ENCODE measurements at regions of chr22 and their contacts with region 1.

Region 1: DNA sequence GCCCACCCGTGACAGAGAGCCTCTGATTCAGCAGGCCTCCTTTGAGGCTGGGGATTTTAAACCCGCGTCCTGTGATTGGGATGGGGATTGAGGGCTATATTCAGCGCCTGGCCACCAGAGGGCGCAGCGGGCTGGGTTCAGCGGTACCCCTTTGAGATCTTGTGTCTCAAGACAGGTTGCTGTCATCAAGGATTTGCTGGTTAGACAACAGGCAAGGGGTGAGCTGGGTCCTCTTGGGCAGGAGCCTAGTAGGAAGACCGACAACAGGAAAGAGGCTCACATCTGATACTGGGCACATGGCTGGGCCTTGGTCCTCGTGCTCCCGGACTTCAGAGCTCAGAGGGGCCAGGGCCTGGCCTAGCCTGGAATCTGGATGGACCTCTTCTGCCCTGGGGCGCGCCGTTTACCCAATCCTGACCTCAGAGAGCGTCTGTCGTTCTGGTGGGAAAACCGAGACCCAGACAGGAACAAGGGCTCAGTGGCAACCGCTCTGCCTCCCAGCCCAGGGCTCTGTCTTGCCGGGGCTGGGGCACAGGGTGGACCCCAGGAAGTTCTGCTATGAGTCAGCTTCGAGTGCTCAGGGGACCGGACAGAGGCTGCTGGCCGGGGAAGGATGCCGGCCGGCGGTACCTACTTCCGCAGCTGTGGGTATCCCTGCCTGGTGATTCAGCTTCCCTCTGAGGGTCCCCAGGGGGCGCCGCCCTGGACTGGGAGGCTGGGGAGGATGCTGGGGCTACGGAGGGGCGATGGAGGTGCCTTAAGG is 929 bp upstream of the SLC35E4 start:
- DNase-seq: peak; percentile 61 to 96 (median 80)
- ATAC-seq: peak; percentile 69 to 86 (median 76)
- H3K4me3 ChIP-seq: peak overlapping the region in 2 of 4 donors; percentile 55 to 70
- H3K27ac ChIP-seq: peak overlapping the region; percentile 59 to 79 (median 64)
- H3K4me1 ChIP-seq: peaks cover 12 to 14% (median 14%) of the 10 kb centered on the region in 3 donors
- H3K27me3 ChIP-seq: no peaks in the 10 kb centered on the region
- CTCF ChIP-seq: peak; percentile 87 to 96 (median 90)

Region 2: DNA sequence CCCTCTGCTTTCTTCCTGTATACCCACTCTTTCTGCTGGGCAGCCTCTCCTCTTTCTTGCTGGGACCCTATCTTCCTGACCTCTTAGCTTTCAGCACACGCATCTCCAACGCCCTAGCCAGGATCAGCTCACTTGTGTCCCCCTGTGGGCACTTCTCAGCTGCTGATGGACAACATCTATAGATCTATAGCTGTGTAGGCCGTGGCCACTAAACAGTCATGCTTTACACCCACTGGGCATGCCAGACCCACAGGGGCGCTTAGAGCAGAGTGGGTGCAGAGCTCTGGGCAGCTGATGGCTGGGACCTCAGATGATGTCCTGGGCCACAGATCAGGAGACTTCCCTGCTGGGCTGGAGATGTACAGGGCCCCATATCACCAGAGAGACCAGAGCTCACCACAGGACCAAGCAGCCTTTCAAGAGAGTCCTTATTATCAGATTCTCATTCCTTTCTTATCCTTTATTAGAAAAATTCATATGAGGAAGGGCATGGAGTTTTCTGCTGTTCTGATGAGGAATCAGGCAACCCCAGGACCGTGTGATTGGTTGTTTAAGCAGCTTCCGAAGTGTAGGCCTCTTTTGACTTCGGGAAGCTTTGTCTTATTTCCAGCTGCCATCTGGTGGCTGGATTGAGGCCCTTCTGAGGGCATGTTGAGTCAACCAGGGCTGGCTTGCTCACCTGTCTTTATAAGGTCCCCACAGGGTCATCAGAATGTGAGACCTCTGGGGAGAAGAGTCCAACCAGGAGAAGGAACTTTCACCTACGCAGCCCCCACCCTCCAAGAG is 120.5 kb after region 1 on chr22:
- intact Hi-C with region 1: loop called in 2 of 3 experiments (anchors 5 to 10 kb)
- DNase-seq: peak in 3 of 6 donors; percentile 24 to 56 (median 37)
- ATAC-seq: peak; percentile 67 to 95 (median 88)
- H3K4me3 ChIP-seq: no peak overlapping the region
- H3K27ac ChIP-seq: no peak overlapping the region
- H3K4me1 ChIP-seq: no peaks in the 10 kb centered on the region
- H3K27me3 ChIP-seq: no peaks in the 10 kb centered on the region
- CTCF ChIP-seq: peak in 3 of 4 donors; percentile 27 to 34 (median 30)

Region 3: DNA sequence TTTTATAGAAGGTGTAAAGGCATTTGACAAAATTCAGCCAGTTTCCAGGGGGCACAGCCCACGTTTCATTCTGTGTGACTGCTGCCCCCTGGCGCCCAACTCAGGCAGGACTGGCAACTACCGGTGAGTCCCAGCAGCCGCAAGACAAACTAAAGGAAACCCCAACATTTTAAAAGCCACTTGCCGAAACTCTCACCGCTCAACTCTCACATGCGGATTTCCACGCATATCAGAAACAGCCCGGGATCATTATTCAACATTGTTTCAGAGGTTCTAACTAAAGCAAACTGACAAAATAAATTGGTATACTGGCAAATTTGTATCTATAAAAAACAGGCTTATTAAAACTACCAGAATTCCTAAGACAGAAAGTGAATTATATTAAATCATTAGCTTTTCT is 285.8 kb after region 1 on chr22:
- intact Hi-C with region 1: loop called in 1 of 3 experiments (anchors 5 kb)
- DNase-seq: peak; percentile 52 to 93 (median 74)
- ATAC-seq: peak; percentile 76 to 84 (median 83)
- H3K4me3 ChIP-seq: peak overlapping the region in 1 of 4 donors; percentile 43
- H3K27ac ChIP-seq: no peak overlapping the region
- H3K4me1 ChIP-seq: peaks cover 0 to 5% (median 4%) of the 10 kb centered on the region in 3 donors
- H3K27me3 ChIP-seq: no peaks in the 10 kb centered on the region
- CTCF ChIP-seq: peak; percentile 74 to 87 (median 86)

Measured in pancreas (tissue), 10 donors.